Activated CD4-positive, alpha-beta memory T cell treated with anti-CD3 and anti-CD28 coated beads for 36 hours (primary cell): ENCODE measurements at regions of chr3 and their contacts with region 1.

Region 1: DNA sequence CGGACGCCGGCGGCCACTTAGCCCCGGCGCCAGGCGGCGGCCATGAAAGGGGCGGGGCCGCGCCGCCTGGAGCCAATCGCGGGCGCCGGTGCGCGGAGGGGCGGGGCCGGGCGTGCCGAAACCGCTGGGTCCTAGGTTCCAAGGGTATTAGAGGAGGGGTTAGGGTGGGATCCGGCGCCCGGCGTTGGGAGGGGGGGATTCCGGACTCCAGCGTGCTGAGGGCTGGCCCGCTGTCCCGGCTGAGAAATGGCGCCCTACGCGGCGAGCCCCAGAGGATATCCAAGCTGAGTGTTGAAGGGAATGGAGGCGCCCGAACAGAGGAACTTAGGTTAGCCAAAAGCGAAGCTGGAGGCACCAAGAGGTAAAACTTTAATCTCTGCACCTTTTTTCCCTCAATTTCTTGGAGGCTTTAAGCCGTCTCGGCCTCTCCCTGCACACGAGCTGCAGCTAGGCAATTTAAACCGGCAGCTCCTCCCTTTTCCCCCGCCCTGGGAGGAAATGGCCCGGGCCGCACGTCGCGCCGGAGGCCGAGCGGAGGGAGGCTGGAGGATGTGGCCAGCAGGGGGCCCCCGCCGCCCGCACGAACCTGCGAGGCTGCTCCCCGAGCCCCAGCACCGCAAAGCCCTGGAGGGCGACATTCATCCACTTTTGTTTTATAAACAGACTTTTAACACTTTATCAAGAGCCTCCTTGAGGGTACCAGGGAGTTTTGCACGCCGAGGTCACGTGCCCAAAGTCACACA is at the start of gene XXYLT1:
- DNase-seq: peak; percentile 95
- H3K4me3 Mint-ChIP-seq: peak within 1 kb of the TSS; percentile 81
- H3K27ac Mint-ChIP-seq: peak within 1 kb of the TSS; percentile 75
- H3K4me1 Mint-ChIP-seq: peaks cover 21% of the 10 kb centered on the region
- H3K27me3 Mint-ChIP-seq: no peaks in the 10 kb centered on the region
- total RNA-seq, gene XXYLT1: 3.3 to 4.4 TPM

Region 2: GRCh38 chr3:194671900-194672808 is 599.1 kb before region 1 on chr3 and contains the start of gene LSG1:
- CTCF ChIA-PET with region 1: interaction called, 30 read pairs
- POLR2A ChIA-PET with region 1: no interaction called
- intact Hi-C with region 1: no loop called
- DNase-seq: peak; percentile 93
- H3K4me3 Mint-ChIP-seq: peak within 1 kb of the TSS; percentile 98
- H3K27ac Mint-ChIP-seq: peak within 1 kb of the TSS; percentile 94
- H3K4me1 Mint-ChIP-seq: peaks cover 59% of the 10 kb centered on the region
- H3K27me3 Mint-ChIP-seq: peaks cover 2% of the 10 kb centered on the region
- total RNA-seq, gene LSG1: 34.6 to 35.3 TPM

Region 3: GRCh38 chr3:195094171-195094921 is 176.9 kb before region 1 on chr3:
- CTCF ChIA-PET with region 1: no interaction called
- POLR2A ChIA-PET with region 1: no interaction called
- intact Hi-C with region 1: no loop called
- DNase-seq: no peak
- H3K4me3 Mint-ChIP-seq: no peak overlapping the region
- H3K27ac Mint-ChIP-seq: no peak overlapping the region
- H3K4me1 Mint-ChIP-seq: no peaks in the 10 kb centered on the region
- H3K27me3 Mint-ChIP-seq: no peaks in the 10 kb centered on the region

Region 4: GRCh38 chr3:195133462-195133861 is 137.8 kb before region 1 on chr3:
- CTCF ChIA-PET with region 1: interaction called, 13 read pairs
- POLR2A ChIA-PET with region 1: no interaction called
- intact Hi-C with region 1: no loop called
- DNase-seq: peak; percentile 90
- H3K4me3 Mint-ChIP-seq: no peak overlapping the region
- H3K27ac Mint-ChIP-seq: peak overlapping the region; percentile 61
- H3K4me1 Mint-ChIP-seq: peaks cover 44% of the 10 kb centered on the region
- H3K27me3 Mint-ChIP-seq: no peaks in the 10 kb centered on the region

Region 5: DNA sequence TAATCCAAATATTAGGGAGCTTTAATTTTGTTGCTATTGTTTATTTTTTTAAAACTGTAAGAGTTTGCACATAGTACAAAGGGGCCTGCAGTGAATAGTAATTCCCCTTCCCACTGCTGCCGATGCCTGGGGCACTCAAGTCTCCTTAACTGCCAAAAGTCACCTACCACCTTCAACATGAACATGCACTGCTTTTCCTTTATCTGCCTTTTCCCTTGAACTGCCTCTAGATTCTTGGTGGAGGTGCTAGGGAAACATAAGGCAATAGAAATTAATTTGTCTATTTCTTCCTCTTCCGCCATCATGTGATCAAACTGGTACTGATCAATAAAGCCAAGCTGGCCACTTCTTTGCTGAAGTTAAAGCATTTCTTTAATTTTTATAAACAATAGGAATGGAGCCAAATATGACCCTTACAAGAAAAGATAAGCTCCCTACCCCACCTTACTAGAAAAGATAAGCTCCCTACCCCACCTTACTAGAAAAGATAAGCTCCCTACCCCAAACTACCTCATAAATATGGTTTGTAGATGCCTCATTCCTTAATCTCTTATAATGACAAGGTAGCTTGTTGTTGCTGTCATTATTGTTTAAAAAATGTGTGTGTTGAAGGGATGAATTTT is 188.9 kb after region 1 on chr3:
- CTCF ChIA-PET with region 1: interaction called, 14 read pairs
- POLR2A ChIA-PET with region 1: no interaction called
- intact Hi-C with region 1: no loop called
- DNase-seq: no peak
- H3K4me3 Mint-ChIP-seq: no peak overlapping the region
- H3K27ac Mint-ChIP-seq: no peak overlapping the region
- H3K4me1 Mint-ChIP-seq: peaks cover 11% of the 10 kb centered on the region
- H3K27me3 Mint-ChIP-seq: no peaks in the 10 kb centered on the region

Region 6: GRCh38 chr3:195522254-195523023 is 251.2 kb after region 1 on chr3:
- CTCF ChIA-PET with region 1: interaction called, 277 read pairs
- POLR2A ChIA-PET with region 1: interaction called, 7 read pairs
- intact Hi-C with region 1: loop called (anchors 1 kb)
- DNase-seq: no peak
- H3K4me3 Mint-ChIP-seq: no peak overlapping the region
- H3K27ac Mint-ChIP-seq: peak overlapping the region; percentile 30
- H3K4me1 Mint-ChIP-seq: peaks cover 37% of the 10 kb centered on the region
- H3K27me3 Mint-ChIP-seq: no peaks in the 10 kb centered on the region

Region 7: DNA sequence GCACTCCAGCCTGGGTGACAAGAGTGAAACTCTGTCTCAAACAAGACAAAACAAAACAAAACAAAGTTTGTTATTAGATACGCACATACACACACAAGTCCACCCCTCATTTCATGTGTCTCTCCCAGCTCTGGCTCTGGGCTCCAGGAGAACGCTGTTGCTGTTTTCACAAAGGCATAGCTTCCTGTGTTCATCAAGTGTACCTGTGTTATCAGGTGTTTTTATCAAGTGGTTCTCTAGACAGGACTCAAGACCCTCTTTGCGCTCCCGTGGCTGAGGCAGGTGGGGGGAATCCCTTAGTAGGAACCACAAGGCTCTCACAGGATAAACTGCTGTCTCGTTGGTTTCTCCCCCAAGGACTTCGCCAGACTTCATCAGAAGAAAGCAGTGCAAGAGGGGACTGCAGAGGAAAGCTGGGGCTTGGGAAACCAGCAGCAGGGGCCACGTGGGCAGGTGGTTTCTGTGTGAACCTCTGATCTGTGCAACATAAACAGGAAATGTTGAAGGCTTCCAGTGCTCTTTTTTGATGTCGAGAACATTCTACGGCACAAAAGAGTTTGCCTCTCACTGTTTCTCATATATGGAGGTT is 278.7 kb after region 1 on chr3:
- CTCF ChIA-PET with region 1: interaction called, 26 read pairs
- POLR2A ChIA-PET with region 1: interaction called, 4 read pairs
- intact Hi-C with region 1: no loop called
- DNase-seq: peak; percentile 87
- H3K4me3 Mint-ChIP-seq: peak overlapping the region; percentile 68
- H3K27ac Mint-ChIP-seq: peak overlapping the region; percentile 87
- H3K4me1 Mint-ChIP-seq: peaks cover 81% of the 10 kb centered on the region
- H3K27me3 Mint-ChIP-seq: no peaks in the 10 kb centered on the region